Activated naive CD4-positive, alpha-beta T cell treated with anti-CD3 and anti-CD28 coated beads for 36 hours (primary cell): ENCODE measurements at regions of chr3 and their contacts with region 1.

Region 1: GRCh38 chr3:43503067-43503728 is 118.6 kb downstream of the ANO10 start:
- DNase-seq: no peak
- H3K4me3 Mint-ChIP-seq: no peak overlapping the region
- H3K27ac Mint-ChIP-seq: no peak overlapping the region
- H3K4me1 Mint-ChIP-seq: peaks cover 64% of the 10 kb centered on the region
- H3K27me3 Mint-ChIP-seq: no peaks in the 10 kb centered on the region

Region 2: GRCh38 chr3:43162230-43163084 is 340.7 kb before region 1 on chr3:
- CTCF ChIA-PET with region 1: interaction called, 30 read pairs
- intact Hi-C with region 1: loop called (anchors 1 kb)
- DNase-seq: peak; percentile 69
- H3K4me3 Mint-ChIP-seq: peak overlapping the region; percentile 58
- H3K27ac Mint-ChIP-seq: peak overlapping the region; percentile 69
- H3K4me1 Mint-ChIP-seq: peaks cover 18% of the 10 kb centered on the region
- H3K27me3 Mint-ChIP-seq: no peaks in the 10 kb centered on the region

Region 3: DNA sequence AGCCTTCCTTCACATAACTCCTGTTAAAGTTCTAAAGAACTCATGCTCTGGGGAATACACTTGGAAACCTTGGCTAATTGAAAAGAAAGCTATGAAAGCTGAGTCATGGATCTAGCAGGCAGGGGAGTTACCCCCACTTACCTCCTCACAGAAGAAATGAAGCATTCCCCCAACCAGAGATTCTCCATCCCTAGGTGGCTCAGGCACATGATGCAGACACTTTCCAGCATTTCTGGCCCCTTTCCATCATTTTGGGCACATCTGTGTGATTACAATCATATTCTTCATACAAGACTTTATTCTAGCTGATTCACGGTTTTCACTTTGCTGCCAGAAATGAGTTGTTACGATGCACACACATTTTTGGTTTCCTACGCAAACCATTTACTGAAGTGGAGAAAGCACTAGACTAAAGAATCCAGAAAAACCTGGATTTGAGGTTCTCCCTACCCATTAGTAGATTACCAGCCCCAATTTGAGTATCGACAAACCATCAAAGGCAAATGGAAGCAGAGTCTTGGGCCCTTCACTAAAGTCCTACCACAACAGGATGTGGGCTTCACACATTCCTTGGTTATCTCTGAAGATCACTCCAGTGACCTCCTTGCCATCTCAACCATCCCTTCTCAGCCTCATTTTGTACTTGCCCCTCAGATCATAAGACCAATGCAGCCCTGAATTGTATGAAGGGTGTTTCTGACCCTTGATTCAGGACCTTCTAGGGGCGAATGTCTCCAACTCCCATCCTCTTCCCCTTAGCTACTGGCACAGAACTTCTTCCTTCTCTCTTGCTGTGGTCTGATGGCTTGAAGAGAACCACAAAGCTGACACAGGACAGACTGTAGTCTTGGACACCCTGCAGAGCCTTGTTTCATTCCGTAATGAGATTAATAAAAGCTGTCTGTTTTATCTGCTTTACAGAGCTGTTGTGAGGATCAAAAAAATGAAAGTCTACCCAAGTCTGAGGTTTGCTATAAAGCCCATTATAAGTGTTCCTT is 259.3 kb before region 1 on chr3:
- CTCF ChIA-PET with region 1: interaction called, 5 read pairs
- intact Hi-C with region 1: loop called (anchors 5 kb)
- DNase-seq: peak; percentile 47
- H3K4me3 Mint-ChIP-seq: no peak overlapping the region
- H3K27ac Mint-ChIP-seq: no peak overlapping the region
- H3K4me1 Mint-ChIP-seq: peaks cover 56% of the 10 kb centered on the region
- H3K27me3 Mint-ChIP-seq: no peaks in the 10 kb centered on the region

Region 4: DNA sequence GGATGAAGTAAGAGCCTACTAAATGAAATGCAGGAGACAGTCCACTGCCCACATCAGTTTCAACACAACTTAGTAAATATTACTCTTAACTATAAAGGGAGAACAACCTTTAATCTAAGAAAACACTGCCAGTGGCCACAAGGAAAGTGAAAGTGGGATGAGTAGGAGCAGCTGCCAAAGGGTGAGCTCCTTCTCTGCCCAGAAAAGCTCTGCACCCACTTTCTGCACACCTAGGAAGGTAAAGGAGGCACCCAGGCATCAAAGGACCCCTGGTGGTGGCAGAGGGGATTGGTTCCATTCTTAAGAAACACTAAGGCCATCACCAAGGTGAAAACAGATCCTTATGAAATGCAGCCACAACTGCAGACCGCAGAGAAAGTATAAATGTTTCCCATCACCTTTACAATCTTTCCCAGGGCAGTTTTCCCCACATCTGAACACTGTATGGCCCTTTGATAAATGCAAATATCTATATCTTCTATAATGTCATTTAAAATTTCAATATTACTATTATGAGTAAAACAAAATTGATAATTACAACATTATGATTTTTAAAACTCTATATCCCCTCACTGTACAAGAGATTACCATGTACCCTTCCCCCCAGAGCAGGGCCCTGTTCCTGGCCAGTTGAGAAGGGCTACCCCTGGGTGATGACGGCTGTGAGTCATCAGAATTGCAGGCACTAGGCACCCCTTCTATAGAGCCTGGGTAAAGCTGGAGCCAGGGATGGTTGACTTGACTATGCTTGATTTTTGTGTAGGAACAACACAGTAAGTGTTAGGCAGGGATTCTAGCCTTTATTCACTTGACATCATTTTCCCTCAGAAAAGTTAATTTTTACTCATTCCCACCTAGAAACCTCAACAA is 124.9 kb before region 1 on chr3:
- CTCF ChIA-PET with region 1: interaction called, 8 read pairs
- intact Hi-C with region 1: loop called (anchors 1 kb)
- DNase-seq: peak; percentile 84
- H3K4me3 Mint-ChIP-seq: no peak overlapping the region
- H3K27ac Mint-ChIP-seq: no peak overlapping the region
- H3K4me1 Mint-ChIP-seq: peaks cover 12% of the 10 kb centered on the region
- H3K27me3 Mint-ChIP-seq: no peaks in the 10 kb centered on the region

Region 5: DNA sequence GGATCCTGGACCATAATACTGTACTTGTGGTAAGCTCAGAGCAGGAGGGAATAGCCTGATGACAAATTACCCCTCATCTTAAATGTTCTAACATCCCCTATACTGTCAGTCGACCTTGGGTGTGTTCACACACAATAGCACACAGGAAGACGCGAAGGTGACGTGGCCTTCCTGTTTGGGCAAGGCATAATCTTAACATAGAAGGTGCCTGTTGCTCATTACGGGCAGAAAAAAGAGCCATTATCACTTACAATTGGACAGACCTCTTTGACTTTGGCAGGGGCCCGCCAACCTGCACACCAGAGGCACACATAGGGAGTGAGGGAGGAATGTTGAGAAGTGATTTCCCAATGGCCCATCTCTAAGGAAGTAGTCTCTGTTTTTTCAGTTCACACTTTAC is 25.6 kb before region 1 on chr3:
- CTCF ChIA-PET with region 1: interaction called, 3 read pairs
- intact Hi-C with region 1: loop called (anchors 2 kb)
- DNase-seq: peak; percentile 83
- H3K4me3 Mint-ChIP-seq: peak overlapping the region; percentile 35
- H3K27ac Mint-ChIP-seq: peak overlapping the region; percentile 91
- H3K4me1 Mint-ChIP-seq: peaks cover 45% of the 10 kb centered on the region
- H3K27me3 Mint-ChIP-seq: no peaks in the 10 kb centered on the region

Region 6: GRCh38 chr3:43523454-43524053 is 20.4 kb after region 1 on chr3:
- CTCF ChIA-PET with region 1: interaction called, 3 read pairs
- intact Hi-C with region 1: loop called (anchors 1 kb)
- DNase-seq: peak; percentile 25
- H3K4me3 Mint-ChIP-seq: no peak overlapping the region
- H3K27ac Mint-ChIP-seq: no peak overlapping the region
- H3K4me1 Mint-ChIP-seq: no peaks in the 10 kb centered on the region
- H3K27me3 Mint-ChIP-seq: no peaks in the 10 kb centered on the region

Region 7: DNA sequence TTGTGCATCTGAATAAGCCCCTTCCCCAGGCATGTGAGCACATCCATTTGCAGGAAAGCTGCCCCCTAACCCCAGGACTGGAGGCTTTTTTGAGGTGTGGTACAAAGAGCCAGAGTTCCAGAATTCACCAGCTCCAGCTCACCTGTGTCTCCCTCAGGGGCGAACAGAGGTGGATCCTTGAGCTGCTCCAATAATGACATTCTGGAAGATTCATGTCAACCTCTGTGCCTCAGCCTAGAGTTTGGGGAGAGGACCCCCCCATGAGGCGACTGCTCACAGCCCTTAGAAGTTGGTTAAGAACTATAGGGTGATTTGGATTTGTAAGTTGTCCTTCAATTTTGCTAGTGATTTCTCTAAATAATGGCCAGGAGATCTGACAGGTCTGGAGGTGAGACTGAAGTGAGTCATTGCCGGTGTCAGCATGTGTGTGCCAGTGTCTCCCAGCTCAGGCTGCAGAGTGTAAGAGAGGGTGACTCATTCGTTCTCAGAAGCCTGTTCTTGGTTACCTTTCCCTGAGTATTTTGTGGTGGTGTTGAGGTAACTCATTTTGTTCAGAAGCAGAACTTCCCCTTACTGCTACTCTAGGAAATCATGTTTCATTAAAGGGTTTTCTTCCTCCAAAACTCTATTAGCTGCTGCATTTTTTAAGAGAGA is 601.6 kb after region 1 on chr3:
- CTCF ChIA-PET with region 1: no interaction called
- intact Hi-C with region 1: loop called (anchors 1 kb)
- DNase-seq: peak; percentile 79
- H3K4me3 Mint-ChIP-seq: no peak overlapping the region
- H3K27ac Mint-ChIP-seq: no peak overlapping the region
- H3K4me1 Mint-ChIP-seq: peaks cover 14% of the 10 kb centered on the region
- H3K27me3 Mint-ChIP-seq: peaks cover 5% of the 10 kb centered on the region